ENCODE measurements at regions of chr6 and their contacts with region 1.

Region 1: DNA sequence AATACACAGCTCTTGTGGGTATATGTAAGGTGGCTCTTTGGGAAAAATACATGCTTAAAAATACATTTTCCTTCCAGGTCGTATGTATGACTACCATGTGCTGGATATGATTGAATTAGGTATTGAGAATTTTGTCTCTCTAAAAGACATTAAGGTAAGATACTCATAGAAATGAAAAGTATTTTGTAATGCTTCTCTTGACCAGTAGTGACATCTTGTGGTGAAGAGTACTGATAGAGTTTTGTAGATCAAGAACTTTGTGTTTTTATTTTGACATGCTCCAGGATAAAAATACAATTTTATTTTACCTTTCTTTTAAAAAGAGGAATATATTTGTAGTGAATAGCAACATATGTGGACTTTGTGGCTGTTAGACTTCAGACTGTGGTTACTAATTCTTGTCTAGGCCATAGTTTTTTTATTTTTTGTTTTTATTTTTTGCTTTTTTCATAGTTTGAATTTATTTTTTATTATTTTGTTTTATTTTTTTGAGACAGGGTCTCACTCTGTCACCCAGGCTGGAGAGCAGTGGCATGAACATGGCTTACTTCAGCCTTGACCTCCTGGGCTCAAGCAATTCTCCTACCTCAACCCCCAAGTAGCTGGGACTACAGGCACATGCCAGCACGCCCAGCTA is 17.9 kb downstream of the RPF2 start:
- DNase-seq: peak; percentile 61
- ATAC-seq: peak; percentile 50; the same call in 1 of the 2 replicates
- H3K4me3 ChIP-seq: no peak overlapping the region
- H3K27ac ChIP-seq: no peak overlapping the region
- H3K4me1 ChIP-seq: no peaks in the 10 kb centered on the region
- H3K27me3 ChIP-seq: no peaks in the 10 kb centered on the region
- CTCF ChIP-seq: peak; percentile 63

Region 2: DNA sequence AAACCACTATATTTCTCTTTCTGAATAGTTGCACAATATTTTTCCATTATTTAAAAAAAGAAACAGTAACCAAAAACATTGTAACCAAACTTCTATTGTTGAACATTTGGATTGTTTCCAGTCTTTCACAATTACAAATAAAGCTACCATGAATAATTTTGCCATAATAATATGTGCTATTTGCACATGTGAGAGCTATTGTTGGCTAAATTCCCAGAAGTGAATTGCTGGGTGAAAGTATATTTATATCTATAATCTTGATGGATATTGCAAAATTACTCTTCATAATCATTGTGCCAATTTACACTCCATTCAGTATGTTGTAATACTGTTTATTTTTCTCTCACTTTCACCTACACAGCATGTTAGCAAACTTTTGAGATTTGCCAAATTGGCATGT is 486.8 kb before region 1 on chr6:
- CTCF ChIA-PET with region 1: no interaction called
- POLR2A ChIA-PET with region 1: no interaction called
- intact Hi-C with region 1: no loop called
- DNase-seq: peak; percentile 77
- ATAC-seq: no peak
- H3K4me3 ChIP-seq: no peak overlapping the region
- H3K27ac ChIP-seq: no peak overlapping the region
- H3K4me1 ChIP-seq: peaks cover 51% of the 10 kb centered on the region
- H3K27me3 ChIP-seq: no peaks in the 10 kb centered on the region
- CTCF ChIP-seq: no peak

Region 3: GRCh38 chr6:110618591-110619267 is 381.0 kb before region 1 on chr6:
- CTCF ChIA-PET with region 1: no interaction called
- POLR2A ChIA-PET with region 1: no interaction called
- intact Hi-C with region 1: loop called (anchors 5 kb)
- DNase-seq: peak; percentile 57
- ATAC-seq: peak; percentile 89
- H3K4me3 ChIP-seq: no peak overlapping the region
- H3K27ac ChIP-seq: peak overlapping the region; percentile 58
- H3K4me1 ChIP-seq: peaks cover 22% of the 10 kb centered on the region
- H3K27me3 ChIP-seq: no peaks in the 10 kb centered on the region
- CTCF ChIP-seq: peak; percentile 67

Measured in PC-3 (cell line).